ENCODE measurements at regions of chr11 and their contacts with region 1.

Region 1: GRCh38 chr11:85826116-85826855 is 15.3 kb upstream of the SYTL2 start:
- DNase-seq: peak; percentile 41
- H3K4me3 Mint-ChIP-seq: no peak overlapping the region
- H3K27ac Mint-ChIP-seq: peak overlapping the region; percentile 9
- H3K4me1 Mint-ChIP-seq: peaks cover 71% of the 10 kb centered on the region
- H3K27me3 Mint-ChIP-seq: no peaks in the 10 kb centered on the region

Region 2: GRCh38 chr11:85595285-85595884 is 230.9 kb before region 1 on chr11:
- CTCF ChIA-PET with region 1: no interaction called
- POLR2A ChIA-PET with region 1: no interaction called
- intact Hi-C with region 1: loop called (anchors 5 kb)
- DNase-seq: no peak
- H3K4me3 Mint-ChIP-seq: no peak overlapping the region
- H3K27ac Mint-ChIP-seq: no peak overlapping the region
- H3K4me1 Mint-ChIP-seq: no peaks in the 10 kb centered on the region
- H3K27me3 Mint-ChIP-seq: no peaks in the 10 kb centered on the region

Region 3: GRCh38 chr11:85627998-85628770 is 198.1 kb before region 1 on chr11 and contains the start of gene TMEM126B:
- CTCF ChIA-PET with region 1: no interaction called
- POLR2A ChIA-PET with region 1: interaction called, 3 read pairs
- intact Hi-C with region 1: loop called (anchors 1 kb)
- DNase-seq: peak; percentile 98
- H3K4me3 Mint-ChIP-seq: peak within 1 kb of the TSS; percentile 100
- H3K27ac Mint-ChIP-seq: peak within 1 kb of the TSS; percentile 99
- H3K4me1 Mint-ChIP-seq: peaks cover 38% of the 10 kb centered on the region
- H3K27me3 Mint-ChIP-seq: no peaks in the 10 kb centered on the region
- total RNA-seq, gene TMEM126B: 59.8 to 64.5 TPM

Region 4: DNA sequence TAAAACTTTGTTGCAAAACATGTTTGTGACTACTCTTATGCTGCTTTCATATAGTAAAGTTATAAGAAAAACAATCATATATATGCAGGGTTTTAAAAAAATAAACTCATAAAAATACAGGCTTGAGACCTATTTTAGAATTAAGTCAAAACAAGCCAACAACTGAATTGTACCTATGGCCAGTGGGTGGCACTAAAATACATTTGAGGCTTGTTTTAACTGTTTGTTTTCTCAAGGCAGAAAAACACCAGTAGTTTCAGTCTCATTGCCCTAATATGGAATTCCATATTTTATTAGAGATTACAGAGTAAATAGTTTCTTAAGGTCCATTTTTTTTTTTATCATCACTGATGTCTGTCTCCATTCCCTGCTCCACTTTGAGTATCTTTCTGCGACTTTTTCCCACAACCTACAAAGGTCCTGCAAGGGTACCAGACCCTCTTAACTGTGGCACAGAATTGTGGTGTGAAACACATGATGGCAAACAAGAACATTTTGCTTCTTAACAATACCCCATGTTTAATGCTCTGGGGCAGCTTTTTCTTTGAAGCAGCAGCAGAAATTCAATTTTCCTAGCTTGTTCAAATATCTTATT is 131.8 kb before region 1 on chr11:
- CTCF ChIA-PET with region 1: interaction called, 4 read pairs
- POLR2A ChIA-PET with region 1: interaction called, 3 read pairs
- intact Hi-C with region 1: loop called (anchors 2 kb)
- DNase-seq: no peak
- H3K4me3 Mint-ChIP-seq: no peak overlapping the region
- H3K27ac Mint-ChIP-seq: no peak overlapping the region
- H3K4me1 Mint-ChIP-seq: peaks cover 20% of the 10 kb centered on the region
- H3K27me3 Mint-ChIP-seq: no peaks in the 10 kb centered on the region

Region 5: DNA sequence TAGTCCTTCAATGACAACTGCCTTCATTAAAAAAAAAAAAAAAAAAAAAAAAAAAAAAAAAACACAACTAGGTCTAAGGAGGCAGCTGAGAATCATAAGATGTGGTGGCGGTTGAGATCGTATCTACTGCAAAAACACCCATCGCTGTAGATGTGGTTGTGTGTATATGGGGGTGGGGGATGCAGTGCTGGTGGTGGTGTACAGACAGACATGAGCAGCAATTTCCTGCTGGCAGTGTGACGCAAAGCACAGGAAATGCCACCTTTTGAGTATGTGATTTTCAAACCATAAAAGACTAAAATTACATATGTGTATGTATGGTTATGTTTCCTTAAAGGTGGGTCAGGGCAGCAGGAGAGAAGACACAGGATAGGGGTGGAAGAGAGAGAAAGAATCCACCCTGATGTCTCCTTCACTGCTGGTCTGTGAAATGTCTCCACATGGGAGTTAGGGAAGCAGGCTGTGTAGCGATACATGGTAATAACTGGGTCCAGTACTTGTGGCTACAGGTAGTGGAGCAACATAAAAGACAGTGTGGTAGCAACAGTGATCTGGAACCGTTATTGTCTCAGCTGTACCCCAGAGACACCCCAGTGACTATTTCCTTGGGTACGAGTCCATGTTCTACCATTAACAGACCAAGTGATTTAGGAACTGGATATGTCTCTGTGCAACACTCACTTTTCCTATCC is 73.2 kb before region 1 on chr11:
- CTCF ChIA-PET with region 1: interaction called, 3 read pairs
- POLR2A ChIA-PET with region 1: no interaction called
- intact Hi-C with region 1: loop called (anchors 1 kb)
- DNase-seq: peak; percentile 94
- H3K4me3 Mint-ChIP-seq: peak overlapping the region; percentile 70
- H3K27ac Mint-ChIP-seq: peak overlapping the region; percentile 96
- H3K4me1 Mint-ChIP-seq: peaks cover 95% of the 10 kb centered on the region
- H3K27me3 Mint-ChIP-seq: peaks cover 3% of the 10 kb centered on the region

Region 6: GRCh38 chr11:85810871-85811611 is 15.2 kb before region 1 on chr11 and contains the start of gene SYTL2:
- CTCF ChIA-PET with region 1: interaction called, 11 read pairs
- POLR2A ChIA-PET with region 1: interaction called, 4 read pairs
- intact Hi-C with region 1: loop called (anchors 1 kb)
- DNase-seq: peak; percentile 82
- H3K4me3 Mint-ChIP-seq: peak within 1 kb of the TSS; percentile 75
- H3K27ac Mint-ChIP-seq: peak within 1 kb of the TSS; percentile 42
- H3K4me1 Mint-ChIP-seq: peaks cover 28% of the 10 kb centered on the region
- H3K27me3 Mint-ChIP-seq: peaks cover 3% of the 10 kb centered on the region
- total RNA-seq, gene SYTL2: 10.2 TPM

Region 7: GRCh38 chr11:85930879-85931366 is 104.6 kb after region 1 on chr11:
- CTCF ChIA-PET with region 1: no interaction called
- POLR2A ChIA-PET with region 1: no interaction called
- intact Hi-C with region 1: no loop called
- DNase-seq: no peak
- H3K4me3 Mint-ChIP-seq: no peak overlapping the region
- H3K27ac Mint-ChIP-seq: no peak overlapping the region
- H3K4me1 Mint-ChIP-seq: no peaks in the 10 kb centered on the region
- H3K27me3 Mint-ChIP-seq: peaks cover 15% of the 10 kb centered on the region

Region 8: GRCh38 chr11:86740709-86741483 is 914.6 kb after region 1 on chr11:
- CTCF ChIA-PET with region 1: no interaction called
- POLR2A ChIA-PET with region 1: no interaction called
- intact Hi-C with region 1: loop called (anchors 10 kb)
- DNase-seq: peak; percentile 55
- H3K4me3 Mint-ChIP-seq: no peak overlapping the region
- H3K27ac Mint-ChIP-seq: no peak overlapping the region
- H3K4me1 Mint-ChIP-seq: peaks cover 19% of the 10 kb centered on the region
- H3K27me3 Mint-ChIP-seq: peaks cover 4% of the 10 kb centered on the region